AG04449 (cell line): ENCODE measurements at regions of chr2 and their contacts with region 1.

Region 1: DNA sequence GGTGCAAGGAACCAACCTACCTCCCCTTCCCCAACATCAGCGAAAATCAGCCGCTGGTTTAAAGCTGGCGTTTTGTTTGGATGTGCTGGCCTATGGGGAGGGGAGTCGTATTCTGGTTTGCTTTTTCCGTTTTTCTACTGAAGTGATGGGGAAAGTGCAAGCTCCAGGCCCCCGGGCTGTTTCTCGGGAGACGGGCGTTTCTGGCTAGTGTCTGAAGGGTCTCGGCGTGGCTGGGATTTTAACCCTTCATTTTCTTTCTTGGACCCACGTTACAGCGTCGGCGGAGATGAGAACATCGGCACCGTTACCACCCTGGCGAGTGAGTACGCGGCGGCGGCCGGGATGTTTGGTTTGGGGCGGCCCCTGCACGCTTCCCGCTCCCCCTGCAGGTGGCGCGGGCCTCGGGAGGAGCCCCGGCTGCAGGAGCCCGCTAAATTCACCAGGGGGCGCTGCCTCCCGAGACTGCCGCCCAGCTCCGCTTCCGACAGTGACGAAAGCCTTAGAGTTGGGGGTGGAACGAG is 70.7 kb downstream of the PLB1 start:
- DNase-seq: no peak
- H3K4me3 ChIP-seq: peak overlapping the region; percentile 68
- CTCF ChIP-seq: peak; percentile 100

Region 2: GRCh38 chr2:28516950-28517349 is 49.6 kb before region 1 on chr2:
- CTCF ChIA-PET with region 1: no interaction called
- POLR2A ChIA-PET with region 1: no interaction called
- DNase-seq: no peak
- H3K4me3 ChIP-seq: no peak overlapping the region
- CTCF ChIP-seq: no peak

Region 3: DNA sequence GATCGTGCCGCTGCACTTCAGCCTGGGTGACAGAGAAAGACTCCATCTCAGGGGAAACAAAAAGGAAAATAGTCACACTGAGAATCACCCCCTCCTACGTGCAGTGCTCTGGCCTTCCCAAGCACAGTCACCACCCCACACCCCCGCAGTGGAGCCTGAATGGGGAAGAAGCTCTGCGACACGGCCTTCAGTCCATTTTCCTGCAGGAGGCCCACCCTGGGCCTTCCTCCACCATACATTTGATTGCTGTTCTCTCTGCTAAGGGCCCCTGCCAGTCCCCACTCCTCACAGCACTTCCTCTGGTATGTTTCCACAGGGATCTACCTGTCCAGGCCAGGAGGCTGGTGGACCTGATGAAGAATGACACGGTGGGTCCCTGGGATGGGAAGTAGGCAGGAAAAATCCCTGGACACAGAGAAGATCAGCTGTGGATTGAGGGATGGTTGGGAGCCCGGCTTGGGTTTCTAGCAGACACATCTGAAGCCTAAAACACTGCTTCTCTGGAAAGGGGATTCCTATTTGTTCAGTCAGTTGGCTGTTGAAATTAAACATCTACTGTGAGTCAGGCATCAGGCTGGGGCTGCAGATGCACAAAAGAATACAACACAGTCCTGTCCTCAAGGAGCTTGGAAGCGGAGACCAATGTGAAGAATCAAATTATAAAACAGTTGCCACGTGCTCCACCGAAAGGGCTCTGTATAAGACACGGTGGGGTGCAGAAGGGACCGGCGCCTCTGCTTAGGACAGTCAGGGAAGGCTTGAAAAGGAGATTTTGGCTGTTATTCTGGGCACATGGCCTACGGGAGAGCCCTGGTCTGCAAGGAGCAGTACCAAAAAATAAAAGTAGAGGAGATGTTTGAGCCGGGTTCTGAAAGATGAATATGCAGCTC is 11.5 kb after region 1 on chr2:
- CTCF ChIA-PET with region 1: interaction called, 54 read pairs
- POLR2A ChIA-PET with region 1: no interaction called
- DNase-seq: no peak
- H3K4me3 ChIP-seq: no peak overlapping the region
- CTCF ChIP-seq: no peak

Region 4: GRCh38 chr2:28751252-28751955 is 184.8 kb after region 1 on chr2 and contains the start of gene PPP1CB:
- CTCF ChIA-PET with region 1: interaction called, 48 read pairs
- POLR2A ChIA-PET with region 1: interaction called, 3 read pairs
- DNase-seq: peak; percentile 65
- H3K4me3 ChIP-seq: peak within 1 kb of the TSS; percentile 91
- CTCF ChIP-seq: peak; percentile 57

Region 5: DNA sequence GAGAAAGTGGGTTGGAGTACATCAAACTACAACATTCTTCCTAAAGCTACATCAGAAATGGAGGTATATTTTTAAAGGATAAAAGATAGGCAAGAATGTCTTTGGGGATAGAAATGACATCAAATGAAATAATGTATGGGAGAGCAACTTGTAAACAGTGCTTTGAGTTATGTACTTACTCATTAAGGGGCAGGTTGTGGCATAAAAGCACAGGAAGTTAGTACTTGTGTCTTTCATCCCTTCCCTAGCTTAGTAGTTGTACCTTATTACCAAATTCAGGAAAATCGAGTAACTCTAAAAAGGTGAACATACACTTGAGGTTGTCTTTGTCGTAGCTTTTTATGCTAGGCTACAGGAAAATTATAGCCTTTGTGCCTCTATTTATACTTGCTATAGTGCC is 213.9 kb after region 1 on chr2:
- CTCF ChIA-PET with region 1: interaction called, 10 read pairs
- POLR2A ChIA-PET with region 1: no interaction called
- DNase-seq: no peak
- H3K4me3 ChIP-seq: no peak overlapping the region
- CTCF ChIP-seq: no peak